OCI-LY7 (cell line): ENCODE measurements at regions of chr9 and their contacts with region 1.

Region 1: GRCh38 chr9:134443168-134444037 is 117.1 kb downstream of the RXRA start:
- DNase-seq: peak; percentile 77
- H3K4me3 ChIP-seq: no peak overlapping the region
- H3K27ac ChIP-seq: no peak overlapping the region
- H3K4me1 ChIP-seq: peaks cover 3% of the 10 kb centered on the region
- CTCF ChIP-seq: peak; percentile 93

Region 2: GRCh38 chr9:134111064-134111463 is 332.3 kb before region 1 on chr9:
- CTCF ChIA-PET with region 1: no interaction called
- POLR2A ChIA-PET with region 1: no interaction called
- intact Hi-C with region 1: no loop called
- DNase-seq: no peak
- H3K4me3 ChIP-seq: no peak overlapping the region
- H3K27ac ChIP-seq: no peak overlapping the region
- H3K4me1 ChIP-seq: no peaks in the 10 kb centered on the region
- CTCF ChIP-seq: no peak

Region 3: DNA sequence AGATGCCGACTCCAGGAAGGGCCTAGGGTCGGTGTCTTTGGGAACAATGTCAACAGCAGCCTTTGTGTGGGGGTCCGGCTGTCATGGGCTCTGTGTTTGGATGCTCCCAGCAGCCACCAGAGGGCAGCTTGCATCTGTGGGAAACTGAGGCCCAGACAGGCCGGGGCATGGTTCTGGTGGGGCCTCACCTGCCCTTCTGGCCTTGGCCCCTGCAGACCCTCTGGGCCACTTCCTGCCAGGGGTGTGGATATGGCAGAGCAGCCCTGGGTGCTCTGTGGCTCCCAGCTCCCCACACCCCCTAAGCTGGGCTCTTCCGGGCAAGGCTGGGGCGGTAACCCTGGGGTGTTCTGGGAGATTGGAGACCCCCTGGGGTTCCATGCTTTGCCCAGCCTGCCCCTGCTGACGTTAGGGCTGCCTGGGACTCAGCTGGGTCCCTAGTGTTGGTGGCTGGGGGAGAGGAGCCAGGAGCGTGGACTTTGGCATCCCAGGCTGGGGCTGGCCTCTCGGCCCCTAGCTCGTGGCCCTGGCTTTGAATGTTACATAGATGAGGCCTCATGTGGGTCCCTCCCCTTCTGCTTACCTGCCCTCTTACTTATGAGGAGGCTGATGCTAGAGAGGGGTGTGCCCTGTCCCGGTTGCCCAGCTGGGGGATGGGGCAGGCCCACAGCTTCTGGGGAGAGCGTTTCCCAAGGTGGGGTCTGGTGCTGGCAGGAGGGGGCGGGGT is 78.8 kb before region 1 on chr9:
- CTCF ChIA-PET with region 1: no interaction called
- POLR2A ChIA-PET with region 1: no interaction called
- intact Hi-C with region 1: loop called (anchors 1 kb)
- DNase-seq: peak; percentile 14
- H3K4me3 ChIP-seq: no peak overlapping the region
- H3K27ac ChIP-seq: no peak overlapping the region
- H3K4me1 ChIP-seq: no peaks in the 10 kb centered on the region
- CTCF ChIP-seq: peak; percentile 64